Activated CD4-positive, alpha-beta T cell treated with anti-CD3 and anti-CD28 coated beads, Interleukin-2, amount 10 ng/mL, durations not matched to agents 24 days and 14 days (primary cell): ENCODE measurements at regions of chrX and their contacts with region 1.

Region 1: DNA sequence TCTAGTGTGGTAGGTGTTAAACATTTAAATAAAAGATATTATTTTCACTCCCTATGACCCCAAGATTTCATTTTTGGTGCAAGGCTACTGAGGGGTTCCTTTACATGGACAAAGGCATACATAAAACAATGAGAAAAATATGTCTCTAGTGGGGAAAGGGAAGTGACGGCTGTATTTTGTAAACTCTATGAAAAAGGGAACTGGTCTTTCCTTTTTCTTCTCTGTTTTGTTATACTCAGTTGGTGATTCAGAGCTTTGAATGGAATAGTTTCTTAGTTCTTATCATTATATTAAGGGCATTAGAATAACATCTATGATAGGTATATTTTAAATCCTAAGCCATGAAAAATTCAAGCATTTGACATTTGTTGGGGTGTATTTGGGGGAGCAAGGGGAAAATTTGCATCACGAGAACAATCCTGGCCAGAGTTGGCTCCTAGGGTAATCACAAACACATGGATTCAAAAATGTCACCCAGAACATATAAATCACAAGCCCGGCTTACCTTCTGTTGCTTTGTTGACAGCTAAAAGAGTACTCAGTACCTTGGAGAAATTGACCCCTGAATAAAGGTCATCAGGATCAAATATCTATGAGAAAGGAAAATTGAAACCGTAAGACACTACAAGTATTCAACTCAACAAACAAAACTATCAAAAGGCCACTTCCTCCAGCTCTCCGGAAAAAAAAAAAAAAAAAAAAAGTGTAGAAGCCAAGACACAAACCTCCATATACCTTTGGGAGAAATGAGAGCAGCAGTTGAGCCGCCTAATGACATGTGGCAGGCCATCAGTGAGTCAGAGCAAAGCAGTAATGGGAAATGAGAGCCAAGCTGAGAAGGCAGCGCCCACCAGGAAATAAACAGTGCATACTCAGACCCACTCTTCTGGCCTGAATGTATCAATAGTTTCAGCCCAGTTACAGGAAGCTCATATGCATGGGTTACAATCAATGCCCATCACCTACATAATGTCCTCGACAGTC is 33.4 kb downstream of the ARHGEF6 start:
- DNase-seq: no peak
- H3K4me3 Mint-ChIP-seq: peak overlapping the region; percentile 69
- H3K27ac Mint-ChIP-seq: peak overlapping the region; percentile 90
- H3K4me1 Mint-ChIP-seq: peaks cover 71% of the 10 kb centered on the region
- H3K27me3 Mint-ChIP-seq: no peaks in the 10 kb centered on the region

Region 2: DNA sequence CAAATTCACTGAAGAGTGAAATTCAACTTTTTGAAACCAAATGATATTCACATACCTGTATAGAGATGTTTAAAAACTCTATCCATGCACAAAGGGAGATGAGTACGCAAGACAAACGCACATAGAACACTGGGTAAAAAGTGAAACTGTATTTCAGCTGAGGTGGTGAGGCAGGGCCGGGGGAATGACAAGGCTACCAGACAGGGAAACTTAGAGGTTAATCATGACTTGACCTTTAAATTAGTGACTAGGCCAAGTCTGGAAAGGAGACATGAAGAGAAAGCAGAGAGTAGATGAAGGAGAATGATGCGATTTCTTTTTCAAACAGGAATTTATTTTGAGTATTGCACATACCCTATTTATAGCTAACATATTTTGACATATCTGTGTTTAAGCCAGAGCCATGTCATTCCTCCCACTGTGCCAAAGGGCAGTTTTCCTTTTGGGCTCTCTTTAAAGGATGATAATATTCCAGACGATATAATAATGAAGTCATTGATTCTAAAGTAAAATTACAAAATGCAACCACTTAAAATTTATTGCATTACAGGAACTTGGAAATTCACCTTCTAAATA is 16.0 kb before region 1 on chrX:
- intact Hi-C with region 1: loop called (anchors 2 kb)
- DNase-seq: no peak
- H3K4me3 Mint-ChIP-seq: peak overlapping the region; percentile 70
- H3K27ac Mint-ChIP-seq: peak overlapping the region; percentile 55
- H3K4me1 Mint-ChIP-seq: peaks cover 43% of the 10 kb centered on the region
- H3K27me3 Mint-ChIP-seq: no peaks in the 10 kb centered on the region

Region 3: GRCh38 chrX:136759968-136760367 is 12.7 kb after region 1 on chrX:
- intact Hi-C with region 1: loop called (anchors 2 kb)
- DNase-seq: peak; percentile 60
- H3K4me3 Mint-ChIP-seq: peak overlapping the region; percentile 50
- H3K27ac Mint-ChIP-seq: peak overlapping the region; percentile 62
- H3K4me1 Mint-ChIP-seq: peaks cover 39% of the 10 kb centered on the region
- H3K27me3 Mint-ChIP-seq: no peaks in the 10 kb centered on the region

Region 4: DNA sequence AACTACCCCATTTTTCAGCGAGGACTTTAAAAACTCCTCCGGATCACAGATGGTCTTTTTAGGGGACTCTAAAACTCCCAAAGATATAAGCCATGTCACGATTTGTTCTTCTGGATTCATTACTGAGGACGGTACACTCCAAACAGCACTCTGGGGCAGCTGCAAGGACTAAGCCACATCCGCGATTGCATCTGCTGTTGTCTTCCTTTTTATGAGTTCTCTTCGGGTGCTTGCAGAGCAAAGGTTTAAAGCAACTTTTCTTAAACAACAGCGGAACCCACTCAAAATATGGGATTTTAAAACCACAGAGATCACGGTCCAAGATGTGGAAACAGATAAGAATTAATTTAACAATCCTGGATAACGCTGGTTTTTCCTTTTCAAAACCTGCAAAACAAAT is 33.5 kb after region 1 on chrX and contains the start of gene ARHGEF6:
- intact Hi-C with region 1: loop called (anchors 2 kb)
- DNase-seq: peak; percentile 81
- H3K4me3 Mint-ChIP-seq: peak within 1 kb of the TSS; percentile 86
- H3K27ac Mint-ChIP-seq: peak within 1 kb of the TSS; percentile 94
- H3K4me1 Mint-ChIP-seq: peaks cover 53% of the 10 kb centered on the region
- H3K27me3 Mint-ChIP-seq: no peaks in the 10 kb centered on the region
- total RNA-seq, gene ARHGEF6: 37.4 and 38.0 TPM in 2 replicates

Region 5: GRCh38 chrX:136812286-136812685 is 65.0 kb after region 1 on chrX:
- intact Hi-C with region 1: no loop called
- DNase-seq: no peak
- H3K4me3 Mint-ChIP-seq: no peak overlapping the region
- H3K27ac Mint-ChIP-seq: no peak overlapping the region
- H3K4me1 Mint-ChIP-seq: peaks cover 12% of the 10 kb centered on the region
- H3K27me3 Mint-ChIP-seq: no peaks in the 10 kb centered on the region